Right ventricle myocardium inferior (tissue), 1 donor: ENCODE measurements at regions of chr2 and their contacts with region 1.

Region 1: DNA sequence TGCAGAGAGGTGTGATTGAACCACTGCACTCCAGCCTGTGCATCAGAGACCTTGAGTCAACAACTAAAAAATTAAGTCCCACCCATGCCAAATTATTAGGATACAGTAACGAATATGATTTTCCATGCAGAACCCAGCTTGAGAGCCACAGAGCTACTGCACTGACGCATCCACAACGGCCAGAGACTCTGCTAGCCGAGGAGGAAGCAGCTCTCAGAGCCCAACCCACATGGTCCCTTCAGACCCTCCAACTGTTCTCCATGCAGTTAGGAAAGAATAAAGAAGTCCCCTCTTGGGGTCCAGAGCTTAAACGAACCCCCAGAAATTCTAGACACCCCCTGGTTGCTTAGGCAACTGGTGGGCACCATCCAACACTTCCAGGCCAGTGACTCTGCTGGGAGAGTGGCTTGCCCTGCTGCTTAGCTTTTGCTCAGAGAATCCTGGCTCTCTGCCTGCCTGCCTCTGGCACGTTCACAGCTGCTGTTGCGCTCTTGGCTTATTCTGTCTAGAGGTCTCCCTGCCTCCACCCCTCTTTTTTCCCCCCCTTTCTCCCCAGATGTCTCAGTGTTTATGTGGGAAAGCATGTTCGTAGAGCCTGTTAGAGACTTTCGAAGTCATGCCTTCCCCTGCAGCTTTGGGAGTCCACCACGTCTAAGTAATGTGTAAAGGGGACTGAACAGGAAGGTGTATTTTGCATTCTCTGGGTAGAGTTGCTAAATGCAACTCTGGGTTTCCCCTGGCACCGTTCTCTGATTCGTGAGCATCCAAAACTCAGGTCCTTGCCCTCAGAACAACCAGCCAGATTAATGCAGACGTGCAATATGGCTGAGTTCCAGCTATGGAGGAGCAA is 26.0 kb upstream of the SP3 start:
- DNase-seq: peak; percentile 88
- ATAC-seq: peak; percentile 79

Region 2: DNA sequence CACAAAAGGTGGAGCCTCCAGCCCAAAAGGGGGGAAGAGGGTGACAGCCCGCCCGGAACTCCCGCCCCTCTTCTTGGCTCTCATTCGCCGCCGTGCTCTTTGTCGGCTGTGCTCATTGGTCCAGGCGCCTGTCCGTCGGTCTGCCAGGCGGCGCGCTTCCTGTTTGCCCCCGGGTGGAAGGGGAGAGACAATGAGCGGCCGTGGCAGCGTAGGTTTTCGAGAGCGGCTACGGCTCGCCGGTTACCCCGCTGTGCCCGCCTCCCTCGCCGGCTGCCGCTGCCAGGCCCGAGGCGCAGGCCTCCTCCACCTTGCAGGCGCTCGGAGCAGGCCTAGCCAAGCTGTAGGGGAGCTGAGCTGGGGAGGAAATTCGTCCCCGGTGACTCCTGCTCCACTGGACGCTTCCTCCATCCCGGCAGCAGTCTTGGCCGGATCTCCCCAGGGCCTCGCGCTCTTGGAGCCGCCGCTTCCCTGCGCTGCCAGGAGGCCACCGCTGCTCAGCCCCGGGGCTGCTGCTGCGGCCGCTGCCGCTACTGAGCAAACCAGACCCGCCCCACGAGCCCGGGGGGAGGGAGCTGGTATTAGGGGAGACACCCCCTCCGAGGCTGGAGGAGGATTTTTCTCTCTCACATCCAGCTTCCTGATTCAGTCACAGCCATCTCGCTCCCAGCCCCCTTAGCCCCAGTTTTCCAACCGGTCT is 25.7 kb before region 1 on chr2 and contains the start of gene SP3:
- intact Hi-C with region 1: loop called (anchors 2 kb)
- DNase-seq: peak; percentile 98
- ATAC-seq: peak; percentile 90
- total RNA-seq, gene SP3: 41.2 TPM

Region 3: DNA sequence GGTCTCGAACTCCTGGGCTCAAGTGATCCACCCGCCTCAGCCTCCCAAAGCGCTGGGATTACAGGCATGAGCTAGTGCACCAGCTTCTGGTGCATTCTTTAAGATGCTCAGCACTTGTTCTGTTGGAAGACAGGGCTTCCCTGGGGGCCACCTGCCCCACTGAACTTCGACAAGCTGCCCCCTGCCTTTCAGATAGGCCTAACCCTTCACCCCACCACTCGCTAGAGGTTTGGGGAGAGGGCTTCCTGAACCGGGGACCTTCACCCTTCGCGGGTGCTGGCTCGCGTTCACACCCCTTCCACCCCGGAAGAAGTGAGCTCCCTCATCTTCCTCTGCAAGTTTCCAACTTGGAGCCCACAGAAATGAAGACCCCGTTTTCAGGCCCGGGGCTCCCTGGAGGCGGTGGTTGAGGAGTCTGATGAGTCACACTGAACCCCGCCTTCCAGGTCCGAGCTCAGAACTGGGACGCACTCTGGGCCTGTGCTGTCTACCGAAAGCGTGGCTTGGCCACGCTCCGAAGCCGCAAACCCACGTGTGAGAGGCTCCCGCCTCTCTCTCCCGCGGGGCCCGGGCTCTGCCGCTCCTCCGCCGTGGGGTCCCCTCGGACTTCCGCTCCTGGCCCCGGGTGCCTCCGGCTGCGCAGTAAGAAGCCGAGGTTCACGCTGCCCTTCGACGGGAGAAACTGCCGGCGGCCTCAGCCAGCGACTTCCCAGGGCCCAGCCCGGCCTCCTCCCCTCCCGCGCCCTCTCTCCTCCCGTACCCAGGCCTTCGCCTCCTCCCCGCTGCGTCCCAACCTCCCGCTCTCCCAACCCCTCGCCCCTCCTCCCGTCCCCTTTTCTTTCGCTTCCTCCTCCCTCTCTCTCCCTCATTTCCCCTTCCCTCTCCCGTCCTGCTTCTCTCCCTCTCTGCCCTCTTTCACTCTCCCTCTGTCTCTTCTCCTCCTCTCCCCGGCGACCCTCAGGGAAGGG is 21.4 kb after region 1 on chr2:
- intact Hi-C with region 1: loop called (anchors 1 kb)
- DNase-seq: peak; percentile 90
- ATAC-seq: peak; percentile 93

Region 4: DNA sequence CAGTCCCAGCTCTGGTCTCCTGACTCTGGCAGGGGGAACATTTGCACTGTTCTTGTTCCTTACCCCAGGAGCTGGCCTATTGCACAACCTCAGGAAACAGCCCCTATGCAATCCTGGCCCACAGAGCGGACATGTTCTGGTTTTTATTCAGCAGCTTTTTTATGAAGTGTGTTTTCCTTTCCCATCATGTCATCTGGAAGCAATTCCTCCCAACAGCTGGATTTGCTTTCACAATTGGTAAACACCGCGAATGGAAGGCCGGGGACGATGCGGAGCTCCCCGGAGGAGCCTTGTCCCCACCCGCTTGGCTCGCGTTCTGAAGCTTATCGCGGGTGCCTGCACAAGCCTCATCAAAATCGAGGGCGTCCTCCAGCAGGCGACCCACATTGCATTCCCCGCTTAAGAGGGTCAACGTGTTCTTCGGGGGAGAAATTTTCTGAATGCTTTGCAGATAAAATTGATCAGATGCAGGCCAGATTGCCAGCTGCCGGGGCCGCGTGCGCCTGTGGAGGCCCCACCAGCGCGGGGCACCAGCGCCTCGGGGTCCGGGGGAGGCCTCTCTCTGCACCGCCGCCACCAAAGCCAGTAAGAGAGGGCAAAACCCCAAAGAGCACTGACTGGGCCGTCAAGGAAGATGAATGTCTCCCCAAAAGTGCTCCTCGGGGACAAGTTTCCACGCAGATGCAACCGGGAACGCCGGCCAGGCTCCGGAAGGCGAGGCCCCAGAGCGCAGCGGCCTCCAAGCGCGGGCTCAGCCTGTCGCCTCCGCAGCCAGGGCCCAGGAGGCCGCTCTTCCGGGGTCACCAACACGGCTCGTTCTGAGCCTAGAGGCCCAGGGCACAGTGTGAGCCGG is 34.3 kb after region 1 on chr2:
- intact Hi-C with region 1: loop called (anchors 5 kb)
- DNase-seq: peak; percentile 89
- ATAC-seq: peak; percentile 91